Left colon (tissue), 2 donors: ENCODE measurements at regions of chr10 and their contacts with region 1.

Region 1: DNA sequence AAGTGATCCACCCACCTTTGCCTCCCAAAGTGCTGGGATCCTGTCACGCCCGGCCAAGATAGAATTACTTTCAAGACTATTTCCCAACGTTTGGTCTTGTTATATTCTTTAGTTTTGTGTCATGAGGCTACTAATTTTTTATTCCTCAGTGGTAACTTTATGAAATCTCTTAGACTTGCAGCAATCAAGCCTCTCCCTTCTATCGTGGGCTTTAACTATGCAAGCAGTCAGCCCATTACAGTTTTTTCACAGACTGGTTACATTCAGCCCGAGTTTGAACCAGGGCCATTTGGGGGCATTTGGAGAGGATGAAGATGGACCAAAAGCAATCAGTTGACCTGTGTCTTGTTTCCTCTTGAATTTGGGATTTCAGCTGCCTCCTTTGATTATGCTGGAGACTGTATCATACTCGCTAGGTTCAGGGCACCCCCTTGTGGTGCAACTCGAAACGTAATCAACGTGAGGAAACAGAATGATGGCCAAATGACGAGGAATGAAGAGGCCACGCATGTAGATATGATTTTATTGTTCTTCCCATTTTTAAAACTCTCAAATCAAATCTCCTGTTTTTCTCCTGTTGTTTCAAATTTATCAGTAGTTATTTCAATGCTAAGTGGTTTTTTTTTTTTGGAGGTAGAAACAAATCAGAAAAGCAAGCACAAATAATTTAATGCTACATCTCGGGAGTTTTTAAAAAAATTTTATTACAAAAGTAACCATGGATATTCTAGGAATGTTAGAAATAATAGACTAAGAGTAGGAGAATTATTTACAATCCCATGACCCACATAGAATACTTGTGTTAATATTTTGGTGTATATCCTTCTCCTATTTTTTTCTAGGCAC is 151.6 kb downstream of the KIAA1217 start:
- DNase-seq: peak; percentile 60 to 83
- ATAC-seq: peak; percentile 83

Region 2: GRCh38 chr10:24150853-24151252 is 209.7 kb before region 1 on chr10:
- intact Hi-C with region 1: no loop called
- DNase-seq: no peak
- ATAC-seq: no peak

Region 3: DNA sequence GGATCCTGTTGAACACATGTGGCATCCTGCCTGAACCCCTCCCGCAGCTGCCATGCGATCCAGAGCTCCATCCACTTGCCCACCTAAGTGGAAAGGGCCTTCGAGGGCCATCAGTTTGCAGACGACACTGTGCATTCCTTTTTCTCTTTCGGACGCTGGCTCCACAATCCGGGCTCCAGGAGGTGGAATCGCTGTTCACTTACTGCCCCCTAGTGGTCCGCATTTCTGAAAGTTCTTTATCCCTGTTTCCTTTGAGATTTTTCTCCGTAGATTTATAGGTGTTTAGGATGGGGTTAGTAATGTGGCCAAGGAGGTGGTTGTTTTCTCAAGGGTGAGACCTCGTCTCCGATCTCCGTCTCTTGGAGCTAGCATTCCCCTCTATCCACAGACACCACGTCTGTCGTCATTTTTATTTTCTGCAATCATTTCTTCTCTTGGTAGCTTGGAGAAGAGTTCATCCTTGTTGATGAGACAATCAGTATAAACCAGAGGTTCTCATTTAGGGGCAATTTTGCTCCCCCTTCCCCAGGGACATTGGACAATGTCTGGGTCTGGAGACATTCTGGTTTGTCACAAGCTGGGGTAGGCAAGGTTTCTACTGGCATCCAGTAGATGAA is 158.6 kb after region 1 on chr10:
- intact Hi-C with region 1: loop called in 1 of 2 experiments (anchors 10 kb)
- DNase-seq: peak in 1 of 2 donors; percentile 66
- ATAC-seq: peak; percentile 66